Posterior cingulate gyrus (tissue), 11 donors: ENCODE measurements at regions of chr18 and their contacts with region 1.

Region 1: DNA sequence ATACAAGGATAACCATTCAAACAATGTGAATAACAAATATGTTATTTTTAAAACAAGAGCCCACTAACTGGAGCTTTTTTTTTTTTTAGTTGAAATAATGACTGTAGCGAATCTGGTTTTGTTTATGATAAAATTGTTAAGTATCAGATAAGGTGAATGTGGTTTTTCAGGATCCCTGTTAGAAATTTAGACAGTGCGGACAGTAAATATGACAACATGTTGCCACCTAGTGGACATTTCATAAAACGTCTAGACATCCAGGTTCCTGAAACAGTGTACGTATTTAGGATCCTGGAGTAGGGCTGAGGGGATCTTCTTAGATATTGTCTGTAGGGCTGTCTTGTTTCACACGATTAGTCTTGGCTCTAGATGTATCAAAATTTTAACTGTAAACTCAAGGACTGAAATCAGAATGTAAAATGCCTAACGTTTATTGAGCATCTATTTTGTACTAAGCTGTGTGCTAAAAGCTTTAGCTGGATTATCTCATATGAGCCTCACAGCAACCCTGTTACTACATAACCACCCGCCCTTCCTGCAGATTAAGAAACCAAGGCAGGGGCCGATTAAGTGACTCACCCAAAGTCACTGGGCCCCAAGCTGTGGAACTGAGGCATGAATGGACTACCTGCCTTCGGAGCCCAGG is 23.9 kb upstream of the CCDC68 start:
- DNase-seq: no peak

Region 2: GRCh38 chr18:54444319-54444914 is 538.7 kb before region 1 on chr18:
- intact Hi-C with region 1: loop called (anchors 10 kb)
- DNase-seq: peak in 8 of 10 donors; percentile 31 to 87 (median 49)

Region 3: GRCh38 chr18:54679318-54680149 is 303.6 kb before region 1 on chr18:
- intact Hi-C with region 1: loop called (anchors 1 kb)
- DNase-seq: no peak

Region 4: GRCh38 chr18:55220523-55220922 is 237.4 kb after region 1 on chr18:
- intact Hi-C with region 1: no loop called
- DNase-seq: no peak